ENCODE measurements at regions of chr20 and their contacts with region 1.

Region 1: GRCh38 chr20:50929299-50930138 is 1.7 kb downstream of the ADNP start:
- DNase-seq: peak; percentile 74 to 90
- ATAC-seq: peak; percentile 36 to 74 (median 70)
- H3K4me3 ChIP-seq: peak overlapping the region; percentile 70 to 94 (median 78)
- H3K27ac ChIP-seq: peak overlapping the region in 8 of 10 donors; percentile 74 to 100 (median 81)
- H3K4me1 ChIP-seq: peaks cover 0 to 61% (median 51%) of the 10 kb centered on the region in 9 donors
- H3K27me3 ChIP-seq: no peaks in the 10 kb centered on the region
- CTCF ChIP-seq: peak; percentile 53 to 92 (median 79)

Region 2: GRCh38 chr20:50528804-50529351 is 400.6 kb before region 1 on chr20:
- intact Hi-C with region 1: no loop called
- DNase-seq: no peak
- ATAC-seq: peak in 6 of 8 donors; percentile 57 to 82 (median 68)
- H3K4me3 ChIP-seq: no peak overlapping the region
- H3K27ac ChIP-seq: peak overlapping the region in 3 of 10 donors; percentile 11 to 29 (median 13)
- H3K4me1 ChIP-seq: peaks cover 6 to 89% (median 59%) of the 10 kb centered on the region in 9 donors
- H3K27me3 ChIP-seq: no peaks in the 10 kb centered on the region
- CTCF ChIP-seq: no peak

Region 3: DNA sequence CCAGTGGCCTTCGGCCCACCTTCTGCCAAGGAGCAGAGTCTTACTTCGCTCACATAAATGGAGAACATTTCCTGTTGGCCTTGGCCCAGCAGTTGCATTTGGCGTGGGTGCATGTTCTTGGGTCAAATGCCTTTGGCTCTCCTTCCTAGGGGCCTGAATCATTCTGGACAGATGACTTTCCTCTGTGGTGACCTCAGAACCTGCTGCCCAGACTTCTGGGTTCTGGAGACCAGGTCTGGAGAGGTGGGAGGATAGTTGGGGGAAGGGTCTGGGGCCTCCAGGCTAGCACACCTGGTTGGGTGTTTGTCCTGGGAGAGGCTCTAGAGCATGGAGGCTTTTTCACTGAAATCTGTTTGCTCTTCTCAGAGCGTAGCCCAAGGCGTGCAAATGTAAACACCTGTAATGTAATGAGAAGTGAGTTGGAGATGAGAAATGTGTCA is 105.3 kb before region 1 on chr20:
- intact Hi-C with region 1: loop called in 1 of 10 experiments (anchors 10 kb)
- DNase-seq: peak in 1 of 2 donors; percentile 20
- ATAC-seq: peak in 2 of 8 donors; percentile 8 to 60
- H3K4me3 ChIP-seq: no peak overlapping the region
- H3K27ac ChIP-seq: no peak overlapping the region
- H3K4me1 ChIP-seq: peaks cover 0 to 4% (median 0%) of the 10 kb centered on the region in 9 donors
- H3K27me3 ChIP-seq: no peaks in the 10 kb centered on the region
- CTCF ChIP-seq: no peak

Region 4: GRCh38 chr20:50859161-50859560 is 70.4 kb before region 1 on chr20:
- intact Hi-C with region 1: no loop called
- DNase-seq: no peak
- ATAC-seq: no peak
- H3K4me3 ChIP-seq: no peak overlapping the region
- H3K27ac ChIP-seq: no peak overlapping the region
- H3K4me1 ChIP-seq: no peaks in the 10 kb centered on the region
- H3K27me3 ChIP-seq: peaks cover 0 to 5% (median 0%) of the 10 kb centered on the region in 7 donors
- CTCF ChIP-seq: no peak

Region 5: DNA sequence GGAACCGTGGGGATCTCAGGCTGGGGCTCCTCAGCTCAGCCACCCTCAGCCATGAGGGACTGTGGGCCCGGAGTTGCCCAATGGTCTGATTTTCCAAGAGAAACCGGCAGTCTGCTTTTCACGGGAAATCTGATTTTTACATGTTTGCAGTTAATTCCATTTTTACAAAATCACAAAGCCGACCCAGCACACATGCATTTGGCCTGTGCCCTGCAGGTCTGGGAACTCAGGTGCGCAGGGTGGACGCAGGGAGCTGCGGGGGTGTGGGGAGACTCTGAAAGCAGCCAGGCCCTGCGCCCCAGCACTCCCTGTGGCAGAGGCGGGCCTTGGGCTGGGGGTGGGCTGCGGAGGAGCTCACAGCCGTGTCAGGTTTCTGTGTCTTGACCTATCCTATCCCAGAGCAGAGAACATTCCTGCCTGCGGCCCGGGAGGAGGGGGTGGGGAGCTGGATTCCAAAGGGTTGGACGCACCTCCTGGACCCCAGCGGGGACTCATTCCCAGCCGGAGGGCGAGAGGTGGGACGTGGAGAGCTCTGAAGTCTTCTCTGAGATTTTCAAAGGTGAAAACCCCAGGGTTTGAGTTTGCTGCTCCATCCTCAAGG is 58.9 kb before region 1 on chr20:
- intact Hi-C with region 1: no loop called
- DNase-seq: no peak
- ATAC-seq: no peak
- H3K4me3 ChIP-seq: no peak overlapping the region
- H3K27ac ChIP-seq: no peak overlapping the region
- H3K4me1 ChIP-seq: no peaks in the 10 kb centered on the region
- H3K27me3 ChIP-seq: no peaks in the 10 kb centered on the region
- CTCF ChIP-seq: no peak

Region 6: GRCh38 chr20:50958615-50959542 is 29.4 kb after region 1 on chr20 and contains the start of gene MOCS3:
- intact Hi-C with region 1: loop called in 3 of 10 experiments (anchors 1 to 2 kb)
- DNase-seq: peak; percentile 72 to 90
- ATAC-seq: peak; percentile 84 to 93 (median 88)
- H3K4me3 ChIP-seq: peak within 1 kb of the TSS; percentile 77 to 100 (median 90)
- H3K27ac ChIP-seq: peak within 1 kb of the TSS; percentile 83 to 97 (median 93)
- H3K4me1 ChIP-seq: peaks cover 9 to 60% (median 45%) of the 10 kb centered on the region in 9 donors
- H3K27me3 ChIP-seq: no peaks in the 10 kb centered on the region
- CTCF ChIP-seq: peak in 2 of 9 donors; percentile 8 to 19
- total RNA-seq, gene MOCS3: 2.3 to 3.2 (median 2.6) TPM

Region 7: DNA sequence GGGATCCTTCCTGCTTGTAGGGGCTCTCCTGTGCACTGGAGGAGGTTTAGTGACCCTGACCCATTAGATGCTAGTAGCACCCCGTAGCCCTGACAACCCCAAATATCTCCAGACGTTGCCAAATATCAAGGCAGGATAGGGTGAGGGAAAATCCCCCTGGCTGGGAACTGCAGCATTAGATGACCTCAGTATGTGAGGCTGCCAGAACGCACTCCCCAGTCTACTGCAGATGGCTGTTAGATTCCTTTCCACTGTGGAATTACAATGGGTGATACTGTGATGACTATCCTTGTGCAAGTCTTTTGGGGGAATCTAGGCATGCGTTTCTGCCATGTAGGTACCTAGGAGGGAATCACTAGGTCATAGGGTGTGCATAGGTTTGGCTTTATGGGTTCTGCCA is 319.7 kb after region 1 on chr20:
- intact Hi-C with region 1: no loop called
- DNase-seq: no peak
- ATAC-seq: peak in 1 of 8 donors; percentile 33
- H3K4me3 ChIP-seq: no peak overlapping the region
- H3K27ac ChIP-seq: no peak overlapping the region
- H3K4me1 ChIP-seq: no peaks in the 10 kb centered on the region
- H3K27me3 ChIP-seq: peaks cover 0 to 47% (median 22%) of the 10 kb centered on the region in 7 donors
- CTCF ChIP-seq: no peak